Motor neuron (in vitro differentiated cells): ENCODE measurements at regions of chr5 and their contacts with region 1.

Region 1: GRCh38 chr5:141701360-141702119 is 19.5 kb upstream of the ARAP3 start:
- ATAC-seq: peak in 4 of 8 experiments; percentile 2 to 32 (median 4)
- H3K4me3 ChIP-seq: peak overlapping the region in 4 of 5 donors; percentile 25 to 41 (median 32)
- H3K27ac ChIP-seq: no peak overlapping the region
- H3K4me1 ChIP-seq: peaks cover 12 to 26% of the 10 kb centered on the region in 2 donors

Region 2: GRCh38 chr5:141811287-141812155 is 110.0 kb after region 1 on chr5:
- in situ Hi-C with region 1: loop called in 1 of 9 experiments (anchors 10 kb)
- ATAC-seq: peak; percentile 53 to 81 (median 76)
- H3K4me3 ChIP-seq: peak overlapping the region in 2 of 5 donors; percentile 12 to 16
- H3K27ac ChIP-seq: peak overlapping the region; percentile 79 to 82
- H3K4me1 ChIP-seq: peaks cover 71 to 75% of the 10 kb centered on the region in 2 donors